IMR-90 (cell line): ENCODE measurements at regions of chr3 and their contacts with region 1.

Region 1: DNA sequence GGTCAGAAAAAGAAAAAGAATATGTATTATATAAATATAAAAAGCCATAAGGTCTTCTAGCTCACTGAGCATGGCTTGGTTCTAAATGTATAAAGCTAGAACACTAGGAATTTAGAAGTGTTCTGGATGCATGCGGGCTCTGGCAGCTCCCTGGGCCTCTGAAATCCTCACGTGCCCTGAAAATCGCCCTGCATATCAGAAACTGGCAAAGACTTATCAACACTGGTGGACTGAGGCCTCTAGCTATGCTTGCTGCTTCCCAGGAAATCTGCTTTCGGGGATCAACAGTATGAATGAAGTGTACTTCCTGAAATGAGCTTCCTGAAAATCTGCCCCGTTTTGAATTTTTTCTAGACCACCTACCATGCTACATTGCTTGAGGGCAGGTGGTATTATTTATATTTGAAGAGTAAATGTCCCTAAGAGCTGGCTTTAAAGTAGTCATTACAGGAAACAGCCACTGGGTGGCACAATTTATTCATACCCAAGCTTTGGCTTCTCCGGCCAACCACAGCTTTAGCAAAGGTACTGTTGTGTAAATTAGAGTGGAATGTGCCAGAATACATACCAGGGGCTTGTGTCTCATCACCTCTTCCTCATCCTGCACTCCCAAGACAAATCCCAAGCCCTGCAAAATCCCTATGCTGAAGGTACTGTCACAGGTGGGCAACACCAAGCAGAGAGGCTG is 17.7 kb downstream of the CRTAP start:
- DNase-seq: peak; percentile 70
- ATAC-seq: peak; percentile 83
- H3K4me3 ChIP-seq: no peak overlapping the region
- H3K27ac ChIP-seq: no peak overlapping the region
- H3K4me1 ChIP-seq: peaks cover 4% of the 10 kb centered on the region
- H3K27me3 ChIP-seq: no peaks in the 10 kb centered on the region
- CTCF ChIP-seq: peak; percentile 83
- POLR2A ChIP-seq: no peak
- RAD21 ChIP-seq: peak; percentile 85

Region 2: GRCh38 chr3:32374788-32375595 is 756.5 kb before region 1 on chr3:
- CTCF ChIA-PET with region 1: no interaction called
- POLR2A ChIA-PET with region 1: no interaction called
- dilution Hi-C with region 1: no loop called
- in situ Hi-C with region 1: no loop called
- intact Hi-C with region 1: no loop called
- DNase-seq: peak; percentile 74
- ATAC-seq: peak; percentile 73
- H3K4me3 ChIP-seq: no peak overlapping the region
- H3K27ac ChIP-seq: no peak overlapping the region
- H3K4me1 ChIP-seq: no peaks in the 10 kb centered on the region; the same call in 1 of the 2 replicates
- H3K27me3 ChIP-seq: peaks cover 9% of the 10 kb centered on the region
- CTCF ChIP-seq: peak; percentile 66
- POLR2A ChIP-seq: no peak
- RAD21 ChIP-seq: peak; percentile 57

Region 3: DNA sequence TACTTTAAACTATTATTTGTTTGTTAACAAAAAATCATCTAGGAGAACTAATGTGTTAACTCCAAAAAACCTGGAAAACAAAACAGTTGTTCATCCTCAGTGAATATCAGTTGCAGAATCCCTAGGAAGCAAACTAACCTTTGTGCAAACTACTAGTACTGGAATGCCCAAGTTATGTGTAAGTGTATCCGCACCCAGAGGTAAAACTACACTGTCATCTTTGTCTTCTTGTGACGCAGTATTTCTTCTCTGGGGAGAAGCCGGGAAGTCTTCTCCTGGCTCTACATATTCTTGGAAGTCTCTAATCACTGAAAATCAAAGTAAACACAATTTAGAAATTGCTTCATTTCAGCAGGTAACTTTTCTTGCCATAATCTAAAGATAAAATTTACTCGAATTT is 590.6 kb before region 1 on chr3:
- CTCF ChIA-PET with region 1: no interaction called
- POLR2A ChIA-PET with region 1: no interaction called
- dilution Hi-C with region 1: no loop called
- in situ Hi-C with region 1: no loop called
- intact Hi-C with region 1: no loop called
- DNase-seq: no peak
- ATAC-seq: no peak
- H3K4me3 ChIP-seq: no peak overlapping the region
- H3K27ac ChIP-seq: no peak overlapping the region
- H3K4me1 ChIP-seq: no peaks in the 10 kb centered on the region
- H3K27me3 ChIP-seq: no peaks in the 10 kb centered on the region
- CTCF ChIP-seq: no peak
- POLR2A ChIP-seq: no peak
- RAD21 ChIP-seq: no peak

Region 4: GRCh38 chr3:32947789-32948238 is 183.7 kb before region 1 on chr3:
- CTCF ChIA-PET with region 1: no interaction called
- POLR2A ChIA-PET with region 1: no interaction called
- dilution Hi-C with region 1: no loop called
- in situ Hi-C with region 1: no loop called
- intact Hi-C with region 1: loop called (anchors 1 kb)
- DNase-seq: peak; percentile 75
- ATAC-seq: peak; percentile 94
- H3K4me3 ChIP-seq: no peak overlapping the region
- H3K27ac ChIP-seq: no peak overlapping the region
- H3K4me1 ChIP-seq: no peaks in the 10 kb centered on the region
- H3K27me3 ChIP-seq: peaks cover 6% of the 10 kb centered on the region
- CTCF ChIP-seq: peak; percentile 78
- POLR2A ChIP-seq: no peak
- RAD21 ChIP-seq: peak; percentile 87

Region 5: GRCh38 chr3:33372218-33373081 is 241.0 kb after region 1 on chr3:
- CTCF ChIA-PET with region 1: interaction called, 66 read pairs
- POLR2A ChIA-PET with region 1: no interaction called
- dilution Hi-C with region 1: loop called (anchors 25 kb)
- in situ Hi-C with region 1: loop called (anchors 5 kb)
- intact Hi-C with region 1: loop called (anchors 1 kb)
- DNase-seq: peak; percentile 73
- ATAC-seq: peak; percentile 86
- H3K4me3 ChIP-seq: no peak overlapping the region
- H3K27ac ChIP-seq: no peak overlapping the region
- H3K4me1 ChIP-seq: peaks cover 5% of the 10 kb centered on the region; the same call in 1 of the 2 replicates
- H3K27me3 ChIP-seq: no peaks in the 10 kb centered on the region
- CTCF ChIP-seq: peak; percentile 87
- POLR2A ChIP-seq: peak; percentile 43; the same call in 1 of the 2 replicates
- RAD21 ChIP-seq: peak; percentile 88

Region 6: DNA sequence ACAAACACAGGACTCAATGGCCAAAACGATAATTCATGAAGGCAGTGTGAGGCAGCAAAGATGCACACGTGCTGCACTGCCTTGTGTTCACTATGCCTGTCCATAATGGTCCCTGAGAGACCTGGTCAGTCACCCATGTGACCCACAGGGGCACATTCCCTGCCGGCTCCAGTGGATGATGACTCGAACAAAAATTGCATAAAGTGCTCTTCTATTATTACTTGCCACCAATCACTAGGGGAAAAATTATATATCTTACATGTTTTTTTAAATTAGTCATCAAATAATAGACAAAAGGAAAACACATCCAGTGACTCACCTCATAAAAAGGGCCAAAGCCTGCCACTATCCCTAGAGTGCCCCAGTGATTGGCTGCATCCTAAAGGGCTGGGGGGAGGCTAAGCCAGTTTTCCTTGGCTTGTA is 261.2 kb after region 1 on chr3:
- CTCF ChIA-PET with region 1: no interaction called
- POLR2A ChIA-PET with region 1: no interaction called
- dilution Hi-C with region 1: loop called (anchors 25 kb)
- in situ Hi-C with region 1: no loop called
- intact Hi-C with region 1: no loop called
- DNase-seq: peak; percentile 93
- ATAC-seq: peak; percentile 96
- H3K4me3 ChIP-seq: no peak overlapping the region
- H3K27ac ChIP-seq: peak overlapping the region; percentile 52; the same call in 1 of the 2 replicates
- H3K4me1 ChIP-seq: peaks cover 10% of the 10 kb centered on the region
- H3K27me3 ChIP-seq: no peaks in the 10 kb centered on the region
- CTCF ChIP-seq: no peak
- POLR2A ChIP-seq: no peak
- RAD21 ChIP-seq: no peak

Region 7: GRCh38 chr3:33440323-33441232 is 309.1 kb after region 1 on chr3 and contains the start of gene UBP1:
- CTCF ChIA-PET with region 1: no interaction called
- POLR2A ChIA-PET with region 1: interaction called, 4 read pairs
- dilution Hi-C with region 1: no loop called
- in situ Hi-C with region 1: no loop called
- intact Hi-C with region 1: loop called (anchors 2 kb)
- DNase-seq: peak; percentile 100
- ATAC-seq: peak; percentile 91
- H3K4me3 ChIP-seq: peak within 1 kb of the TSS; percentile 73
- H3K27ac ChIP-seq: peak within 1 kb of the TSS; percentile 92
- H3K4me1 ChIP-seq: peaks cover 2% of the 10 kb centered on the region
- H3K27me3 ChIP-seq: no peaks in the 10 kb centered on the region
- CTCF ChIP-seq: 0 out of 2 replicates have a peak, but pooled peaks have one; percentile 9
- POLR2A ChIP-seq: peak; percentile 91
- RAD21 ChIP-seq: no peak
- total RNA-seq, gene UBP1: 56.3 and 68.6 TPM in 2 replicates

Region 8: DNA sequence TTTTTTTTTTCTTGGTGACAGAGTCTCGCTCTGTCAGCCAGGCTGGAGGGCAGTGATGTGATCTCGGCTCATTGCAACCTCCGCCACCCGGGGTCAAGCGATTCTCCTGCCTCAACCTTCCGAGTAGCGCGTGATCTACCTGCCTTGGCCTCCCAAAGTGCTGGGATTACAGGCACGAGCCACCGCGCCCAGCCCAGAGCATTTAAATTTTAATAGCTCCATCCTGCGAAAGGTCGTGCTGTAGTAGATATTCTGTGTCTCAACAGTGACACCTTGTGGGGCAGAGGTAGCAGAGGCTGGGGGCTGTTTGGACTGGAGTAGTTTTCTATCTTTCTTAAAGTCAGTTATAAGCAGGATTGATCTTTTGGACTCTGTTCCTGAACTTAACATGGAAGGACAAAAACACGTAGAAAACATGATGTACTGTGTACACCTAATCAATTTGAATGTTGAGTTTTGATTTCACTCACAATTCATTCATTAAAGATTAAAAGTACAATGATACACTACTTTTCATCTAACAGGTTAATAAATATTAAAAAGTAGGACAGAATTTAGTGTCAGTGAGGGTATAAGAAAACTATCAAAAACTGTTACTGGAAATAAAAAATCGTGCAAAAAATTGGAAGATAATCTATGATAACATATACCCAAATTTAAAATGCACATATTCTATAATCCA is 656.0 kb after region 1 on chr3:
- CTCF ChIA-PET with region 1: interaction called, 7 read pairs
- POLR2A ChIA-PET with region 1: no interaction called
- dilution Hi-C with region 1: no loop called
- in situ Hi-C with region 1: loop called (anchors 10 kb)
- intact Hi-C with region 1: loop called (anchors 1 kb)
- DNase-seq: peak; percentile 72
- ATAC-seq: peak; percentile 97
- H3K4me3 ChIP-seq: peak overlapping the region; percentile 28
- H3K27ac ChIP-seq: no peak overlapping the region
- H3K4me1 ChIP-seq: peaks cover 2% of the 10 kb centered on the region
- H3K27me3 ChIP-seq: no peaks in the 10 kb centered on the region
- CTCF ChIP-seq: peak; percentile 84
- POLR2A ChIP-seq: no peak
- RAD21 ChIP-seq: peak; percentile 78